Transverse colon (tissue), 4 donors: ENCODE measurements at regions of chr10 and their contacts with region 1.

Region 1: DNA sequence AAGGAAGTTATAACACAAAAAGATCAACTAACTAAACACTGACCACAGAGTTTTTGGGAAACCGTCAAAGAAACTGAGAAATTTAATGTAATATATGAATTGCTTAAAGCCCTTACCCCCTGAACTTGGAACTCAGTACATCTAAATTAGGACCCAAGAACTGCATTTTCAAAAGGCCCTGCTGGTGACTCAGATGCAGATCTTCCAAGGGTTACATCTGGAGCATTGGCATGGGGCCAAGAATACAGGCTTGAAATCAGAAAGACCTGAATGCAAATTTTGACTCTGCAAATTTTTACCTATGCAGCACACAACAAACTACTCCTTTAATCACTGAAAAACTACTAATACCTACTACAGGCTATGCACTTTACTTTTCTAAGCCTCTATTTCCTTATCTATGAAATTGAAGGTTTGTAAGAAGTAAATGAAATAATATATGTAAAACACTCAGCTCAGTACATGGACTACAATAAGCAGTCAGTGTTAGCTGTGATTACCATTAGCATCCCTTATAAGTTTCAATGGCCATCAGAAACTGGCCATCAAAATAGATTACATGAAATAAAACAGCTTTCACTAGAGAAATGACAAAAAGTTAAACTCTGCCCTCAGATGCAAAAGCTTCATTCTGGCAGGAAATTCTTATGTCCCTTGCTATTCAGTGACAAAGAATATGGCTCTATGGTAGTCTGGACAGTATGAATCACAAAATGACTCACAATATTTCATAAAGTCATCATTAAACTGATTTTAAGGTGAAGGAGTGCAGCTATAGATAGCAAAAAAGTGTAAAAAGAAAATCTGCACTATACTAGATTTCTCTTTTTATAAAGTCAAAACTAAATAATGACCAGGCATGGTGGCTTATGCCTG is 43.6 kb downstream of the NSUN6 start:
- DNase-seq: peak; percentile 36
- H3K4me3 ChIP-seq: no peak overlapping the region
- H3K27ac ChIP-seq: no peak overlapping the region
- H3K4me1 ChIP-seq: peaks cover 0 to 18% (median 9%) of the 10 kb centered on the region in 4 donors
- H3K27me3 ChIP-seq: no peaks in the 10 kb centered on the region
- CTCF ChIP-seq: no peak
- EP300 ChIP-seq: no peak
- POLR2A ChIP-seq: no peak

Region 2: DNA sequence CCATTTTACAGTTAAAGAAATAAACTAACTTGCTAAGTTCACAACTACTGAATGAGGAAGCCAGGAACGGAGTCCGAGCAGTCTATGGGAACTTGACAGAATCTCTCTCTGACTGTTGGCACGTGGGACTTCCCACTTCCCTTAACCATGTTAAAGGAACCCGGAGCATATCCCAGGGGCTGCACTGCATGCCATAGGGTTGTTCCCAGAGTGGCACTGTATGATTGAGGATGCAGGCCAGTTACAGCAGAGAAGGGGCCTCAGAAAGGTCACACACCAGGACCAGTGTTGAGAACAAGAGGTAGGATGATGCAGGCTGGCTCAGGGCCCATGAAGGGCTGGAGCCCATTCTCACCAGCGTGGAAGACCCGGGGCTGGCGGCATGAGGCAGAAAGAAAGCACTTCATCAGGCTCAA is 158.1 kb before region 1 on chr10:
- in situ Hi-C with region 1: no loop called
- intact Hi-C with region 1: no loop called
- DNase-seq: no peak
- H3K4me3 ChIP-seq: no peak overlapping the region
- H3K27ac ChIP-seq: no peak overlapping the region
- H3K4me1 ChIP-seq: no peaks in the 10 kb centered on the region
- H3K27me3 ChIP-seq: no peaks in the 10 kb centered on the region
- CTCF ChIP-seq: no peak
- EP300 ChIP-seq: no peak
- POLR2A ChIP-seq: no peak

Region 3: DNA sequence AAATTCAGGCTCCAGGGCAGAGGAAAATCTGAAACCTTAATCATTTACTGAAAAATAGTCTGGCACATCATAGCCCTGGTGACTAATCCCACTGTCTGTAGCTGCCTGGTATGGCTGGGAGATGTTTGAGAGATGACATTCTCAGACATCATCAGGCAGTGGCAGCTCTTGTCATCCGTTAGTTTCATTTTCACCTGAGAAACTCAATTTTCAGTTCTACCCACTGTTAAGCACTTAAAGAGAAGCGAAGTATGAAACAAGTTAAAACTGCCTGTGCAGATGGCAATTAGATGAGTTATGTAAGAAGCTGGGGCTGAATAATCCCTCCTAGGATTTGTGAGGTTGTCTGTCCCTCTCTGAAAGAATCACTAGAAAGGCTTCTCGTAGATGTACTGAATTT is 106.5 kb before region 1 on chr10:
- in situ Hi-C with region 1: loop called in 1 of 4 experiments (anchors 25 kb)
- intact Hi-C with region 1: no loop called
- DNase-seq: no peak
- H3K4me3 ChIP-seq: no peak overlapping the region
- H3K27ac ChIP-seq: no peak overlapping the region
- H3K4me1 ChIP-seq: peaks cover 0 to 3% (median 0%) of the 10 kb centered on the region in 4 donors
- H3K27me3 ChIP-seq: no peaks in the 10 kb centered on the region
- CTCF ChIP-seq: no peak
- EP300 ChIP-seq: no peak
- POLR2A ChIP-seq: no peak